Natural killer cell (primary cell): ENCODE measurements at regions of chr9 and their contacts with region 1.

Region 1: GRCh38 chr9:132412089-132412488 is 2.1 kb downstream of the CFAP77 start:
- DNase-seq: peak; percentile 26 to 59
- ATAC-seq: peak in 2 of 3 donors; percentile 43 to 55
- H3K4me3 ChIP-seq: no peak overlapping the region
- H3K4me3 Mint-ChIP-seq: no peak overlapping the region
- H3K27ac ChIP-seq: no peak overlapping the region
- H3K27ac Mint-ChIP-seq: no peak overlapping the region
- H3K4me1 ChIP-seq: peaks cover 26% of the 10 kb centered on the region
- H3K4me1 Mint-ChIP-seq: peaks cover 12% of the 10 kb centered on the region in 2 donors
- H3K27me3 ChIP-seq: peaks cover 37% of the 10 kb centered on the region
- H3K27me3 Mint-ChIP-seq: peaks cover 46 to 53% of the 10 kb centered on the region in 2 donors
- CTCF ChIP-seq: peak; percentile 74

Region 2: GRCh38 chr9:132584601-132585560 is 172.8 kb after region 1 on chr9:
- intact Hi-C with region 1: no loop called
- DNase-seq: no peak
- ATAC-seq: no peak
- H3K4me3 ChIP-seq: no peak overlapping the region
- H3K4me3 Mint-ChIP-seq: no peak overlapping the region
- H3K27ac ChIP-seq: no peak overlapping the region
- H3K27ac Mint-ChIP-seq: no peak overlapping the region
- H3K4me1 ChIP-seq: peaks cover 23% of the 10 kb centered on the region
- H3K4me1 Mint-ChIP-seq: peaks cover 12 to 15% of the 10 kb centered on the region in 2 donors
- H3K27me3 ChIP-seq: peaks cover 90% of the 10 kb centered on the region
- H3K27me3 Mint-ChIP-seq: peaks cover 54 to 57% of the 10 kb centered on the region in 2 donors
- CTCF ChIP-seq: no peak

Region 3: DNA sequence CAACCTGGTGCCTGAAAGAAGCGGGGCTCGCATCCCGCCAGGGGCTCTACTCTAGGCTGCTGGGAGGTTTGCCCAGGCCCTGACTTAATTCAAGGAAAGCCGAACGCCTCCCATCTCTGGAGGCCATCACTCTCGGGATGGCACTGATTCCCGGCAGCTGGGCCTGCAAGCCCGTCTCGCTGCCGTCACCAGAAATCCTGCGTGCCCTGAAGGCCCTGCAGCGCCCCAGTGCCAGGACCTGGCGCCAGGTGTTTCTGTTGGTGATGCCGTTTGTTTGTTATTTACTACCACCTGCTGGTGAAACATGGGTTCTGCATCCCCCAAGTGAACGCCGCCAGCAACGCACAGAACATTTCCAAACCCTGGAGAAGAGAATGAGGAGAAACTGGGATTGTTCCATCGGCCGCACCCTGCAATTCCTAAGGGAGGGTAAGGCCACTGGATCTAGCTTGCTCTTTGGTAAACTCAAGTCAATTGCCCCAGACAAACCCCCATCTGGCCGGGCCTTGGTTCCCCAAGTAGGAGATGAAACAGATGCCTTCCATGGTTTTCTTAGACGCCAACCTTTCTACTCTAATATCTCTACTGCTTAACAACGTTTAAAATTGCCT is 388.1 kb after region 1 on chr9:
- intact Hi-C with region 1: loop called (anchors 1 kb)
- DNase-seq: peak; percentile 42 to 84
- ATAC-seq: peak; percentile 72 to 86 (median 83)
- H3K4me3 ChIP-seq: no peak overlapping the region
- H3K4me3 Mint-ChIP-seq: no peak overlapping the region
- H3K27ac ChIP-seq: no peak overlapping the region
- H3K27ac Mint-ChIP-seq: no peak overlapping the region
- H3K4me1 ChIP-seq: peaks cover 25% of the 10 kb centered on the region
- H3K4me1 Mint-ChIP-seq: peaks cover 25 to 43% of the 10 kb centered on the region in 2 donors
- H3K27me3 ChIP-seq: no peaks in the 10 kb centered on the region
- H3K27me3 Mint-ChIP-seq: peaks cover 0 to 16% of the 10 kb centered on the region in 2 donors
- CTCF ChIP-seq: peak; percentile 85

Region 4: DNA sequence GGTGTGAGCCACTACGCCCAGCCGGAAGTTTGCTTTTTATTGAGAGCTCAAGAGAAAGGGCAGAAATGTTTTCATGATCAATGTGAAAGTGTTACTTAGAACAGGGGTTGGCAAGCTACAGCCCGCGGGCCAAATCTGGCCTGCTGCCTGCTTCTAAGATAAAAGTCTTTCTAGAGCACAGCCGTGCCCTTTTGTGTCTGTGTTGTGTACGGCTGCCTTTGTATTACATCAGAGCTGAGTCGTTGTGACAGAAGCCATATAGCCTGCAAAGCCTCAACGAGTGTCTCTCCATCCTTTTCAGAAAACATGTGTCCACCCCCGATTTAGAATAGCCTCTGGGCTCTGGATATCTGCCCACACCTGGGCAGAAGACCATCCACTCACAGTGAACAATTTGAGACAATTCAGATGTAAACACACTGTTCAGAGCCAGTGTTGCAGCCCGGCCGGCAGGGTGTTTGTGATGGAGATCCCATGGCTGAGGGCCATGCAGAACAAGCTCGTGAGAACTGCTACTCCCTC is 437.2 kb after region 1 on chr9:
- intact Hi-C with region 1: no loop called
- DNase-seq: peak in 1 of 2 donors; percentile 31
- ATAC-seq: no peak
- H3K4me3 ChIP-seq: no peak overlapping the region
- H3K4me3 Mint-ChIP-seq: no peak overlapping the region
- H3K27ac ChIP-seq: no peak overlapping the region
- H3K27ac Mint-ChIP-seq: no peak overlapping the region
- H3K4me1 ChIP-seq: peaks cover 6% of the 10 kb centered on the region
- H3K4me1 Mint-ChIP-seq: peaks cover 8 to 9% of the 10 kb centered on the region in 2 donors
- H3K27me3 ChIP-seq: no peaks in the 10 kb centered on the region
- H3K27me3 Mint-ChIP-seq: no peaks in the 10 kb centered on the region
- CTCF ChIP-seq: no peak